Panc1 (cell line): ENCODE measurements at regions of chr5 and their contacts with region 1.

Region 1: DNA sequence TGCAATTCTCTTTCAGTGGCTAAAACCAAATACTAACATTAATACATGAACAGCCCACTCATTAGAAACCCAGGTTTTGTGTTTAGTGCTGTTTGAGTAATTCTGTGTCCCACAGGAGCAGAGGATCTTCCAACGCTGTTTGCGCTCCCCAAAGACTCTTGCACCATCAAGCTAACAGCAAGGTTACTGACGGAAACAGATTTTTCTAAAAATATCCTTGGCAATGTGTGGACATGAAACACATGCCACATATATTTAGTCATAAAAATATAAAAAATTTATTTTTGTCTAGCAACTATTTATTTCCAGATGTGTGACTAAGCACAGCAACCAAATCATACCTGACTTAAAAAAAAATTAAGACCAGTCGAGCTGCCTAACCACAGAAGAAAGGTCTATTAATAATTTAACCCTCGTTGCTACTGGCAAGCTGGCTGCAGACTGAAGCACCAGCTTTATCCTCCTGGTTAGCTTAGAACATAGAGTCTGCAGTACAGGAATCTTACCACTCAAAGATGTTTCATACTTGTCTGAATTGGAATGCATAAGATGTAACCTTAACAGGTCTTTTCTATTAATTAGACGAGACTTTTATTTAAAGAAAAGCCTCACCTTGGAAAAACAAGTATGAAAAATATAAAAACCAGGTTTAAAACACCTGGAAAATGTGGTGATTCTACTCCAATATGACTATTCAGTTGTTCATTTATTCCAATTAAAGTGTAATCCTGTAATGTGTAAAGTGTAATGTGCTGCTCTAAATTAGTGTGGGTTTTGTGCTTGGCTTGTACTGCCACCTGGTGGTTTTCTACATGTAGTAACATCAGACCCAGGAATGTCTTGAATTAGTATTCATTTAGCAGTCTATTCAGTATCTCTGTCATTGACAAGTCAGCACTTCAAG is 272.5 kb downstream of the EPB41L4A start:
- DNase-seq: peak; percentile 55
- ATAC-seq: peak; percentile 96
- H3K4me3 ChIP-seq: no peak overlapping the region
- H3K27ac ChIP-seq: no peak overlapping the region
- H3K4me1 ChIP-seq: no peaks in the 10 kb centered on the region
- H3K27me3 ChIP-seq: no peaks in the 10 kb centered on the region
- CTCF ChIP-seq: peak; percentile 76; the same call in 1 of the 2 replicates

Region 2: DNA sequence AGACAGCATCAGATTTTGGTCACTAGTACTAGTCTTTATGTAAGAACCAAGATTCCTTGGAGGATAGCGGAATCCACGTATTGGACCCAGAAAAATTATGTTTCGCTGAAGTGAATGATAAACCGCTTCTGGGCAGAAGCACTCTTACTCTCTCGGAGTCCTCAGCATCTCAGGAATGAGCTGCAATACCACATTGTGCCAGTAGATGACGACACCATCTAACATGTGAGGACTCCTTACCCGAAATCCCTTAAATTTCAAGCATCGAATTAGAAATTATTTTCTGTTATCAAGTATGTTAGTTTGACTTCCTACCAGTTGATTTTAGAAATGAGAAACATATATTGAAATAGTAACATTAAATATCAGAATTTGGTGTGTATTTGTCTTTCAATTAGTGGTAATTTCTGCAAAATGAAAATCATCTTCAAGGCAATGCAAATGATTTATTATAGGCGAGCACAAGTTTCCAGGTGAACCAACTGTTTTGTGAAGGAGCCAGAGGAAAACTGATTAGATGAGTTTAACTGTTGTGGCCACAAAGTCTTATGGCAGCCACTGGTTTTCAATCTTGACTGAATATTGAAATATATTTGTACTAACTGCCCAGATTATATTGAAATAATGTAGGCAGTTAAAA is 988.4 kb before region 1 on chr5:
- CTCF ChIA-PET with region 1: no interaction called
- POLR2A ChIA-PET with region 1: no interaction called
- in situ Hi-C with region 1: no loop called
- intact Hi-C with region 1: loop called (anchors 5 kb)
- DNase-seq: peak; percentile 82
- ATAC-seq: peak; percentile 73
- H3K4me3 ChIP-seq: no peak overlapping the region
- H3K27ac ChIP-seq: no peak overlapping the region
- H3K4me1 ChIP-seq: no peaks in the 10 kb centered on the region
- H3K27me3 ChIP-seq: peaks cover 8% of the 10 kb centered on the region
- CTCF ChIP-seq: peak; percentile 99

Region 3: GRCh38 chr5:111530298-111530740 is 616.3 kb before region 1 on chr5:
- CTCF ChIA-PET with region 1: no interaction called
- POLR2A ChIA-PET with region 1: no interaction called
- in situ Hi-C with region 1: no loop called
- intact Hi-C with region 1: loop called (anchors 5 kb)
- DNase-seq: no peak
- ATAC-seq: 0 out of 2 replicates have a peak, but pooled peaks have one; percentile 62
- H3K4me3 ChIP-seq: no peak overlapping the region
- H3K27ac ChIP-seq: no peak overlapping the region
- H3K4me1 ChIP-seq: no peaks in the 10 kb centered on the region
- H3K27me3 ChIP-seq: no peaks in the 10 kb centered on the region
- CTCF ChIP-seq: no peak

Region 4: GRCh38 chr5:111550279-111551020 is 596.1 kb before region 1 on chr5:
- CTCF ChIA-PET with region 1: no interaction called
- POLR2A ChIA-PET with region 1: no interaction called
- in situ Hi-C with region 1: no loop called
- intact Hi-C with region 1: loop called (anchors 1 kb)
- DNase-seq: peak; percentile 69
- ATAC-seq: peak; percentile 97
- H3K4me3 ChIP-seq: no peak overlapping the region
- H3K27ac ChIP-seq: no peak overlapping the region
- H3K4me1 ChIP-seq: no peaks in the 10 kb centered on the region
- H3K27me3 ChIP-seq: no peaks in the 10 kb centered on the region
- CTCF ChIP-seq: peak; percentile 80

Region 5: GRCh38 chr5:111680737-111681413 is 465.7 kb before region 1 on chr5:
- CTCF ChIA-PET with region 1: no interaction called
- POLR2A ChIA-PET with region 1: no interaction called
- in situ Hi-C with region 1: no loop called
- intact Hi-C with region 1: loop called (anchors 10 kb)
- DNase-seq: no peak
- ATAC-seq: peak; percentile 89
- H3K4me3 ChIP-seq: no peak overlapping the region
- H3K27ac ChIP-seq: 0 out of 2 replicates have a peak overlapping the region, but pooled peaks have one; percentile 17
- H3K4me1 ChIP-seq: peaks cover 7% of the 10 kb centered on the region; the same call in 1 of the 2 replicates
- H3K27me3 ChIP-seq: no peaks in the 10 kb centered on the region
- CTCF ChIP-seq: no peak

Region 6: GRCh38 chr5:112279082-112279481 is 132.5 kb after region 1 on chr5:
- CTCF ChIA-PET with region 1: no interaction called
- POLR2A ChIA-PET with region 1: interaction called, 16 read pairs
- in situ Hi-C with region 1: no loop called
- intact Hi-C with region 1: no loop called
- DNase-seq: no peak
- ATAC-seq: no peak
- H3K4me3 ChIP-seq: no peak overlapping the region
- H3K27ac ChIP-seq: no peak overlapping the region
- H3K4me1 ChIP-seq: no peaks in the 10 kb centered on the region
- H3K27me3 ChIP-seq: peaks cover 3% of the 10 kb centered on the region; the same call in 1 of the 2 replicates
- CTCF ChIP-seq: no peak